Transverse colon (tissue), 4 donors: ENCODE measurements at regions of chr2 and their contacts with region 1.

Region 1: DNA sequence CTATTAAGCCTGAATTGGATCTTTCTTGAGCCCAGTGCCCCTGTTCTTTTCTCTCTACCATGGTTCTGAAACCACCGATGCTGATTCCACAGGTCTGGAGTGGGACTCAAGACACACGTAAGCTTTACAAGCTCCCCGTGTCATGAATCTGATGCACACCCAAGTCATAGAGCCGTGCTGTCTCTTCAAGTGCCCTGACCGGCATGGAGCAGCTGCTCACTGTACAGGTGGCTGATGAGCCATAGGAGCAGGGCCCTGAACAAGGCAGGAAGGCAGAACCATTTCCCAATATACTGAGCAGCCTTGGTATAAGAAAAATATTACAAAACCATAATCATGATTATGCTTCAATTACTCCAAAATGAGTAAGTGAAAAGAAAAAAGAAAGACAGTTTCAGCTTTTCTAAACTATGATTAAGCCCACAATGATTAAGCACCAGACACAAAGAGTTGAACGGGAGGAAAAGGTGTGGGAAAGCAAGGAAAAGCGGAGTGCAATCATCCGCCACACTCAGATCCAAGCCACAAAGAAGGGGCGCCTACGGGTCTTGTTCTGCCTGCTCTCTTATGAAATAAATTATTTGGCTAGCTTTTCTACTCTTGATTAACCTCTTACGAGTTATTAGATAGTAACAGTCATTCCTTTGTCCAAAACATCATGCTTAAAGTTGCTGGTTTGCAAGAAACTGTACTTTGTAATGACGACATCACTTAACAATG is 41.7 kb downstream of the NOL10 start:
- DNase-seq: no peak
- H3K4me3 ChIP-seq: no peak overlapping the region
- H3K27ac ChIP-seq: no peak overlapping the region
- H3K4me1 ChIP-seq: no peaks in the 10 kb centered on the region
- H3K27me3 ChIP-seq: no peaks in the 10 kb centered on the region
- CTCF ChIP-seq: no peak
- EP300 ChIP-seq: no peak
- POLR2A ChIP-seq: no peak

Region 2: DNA sequence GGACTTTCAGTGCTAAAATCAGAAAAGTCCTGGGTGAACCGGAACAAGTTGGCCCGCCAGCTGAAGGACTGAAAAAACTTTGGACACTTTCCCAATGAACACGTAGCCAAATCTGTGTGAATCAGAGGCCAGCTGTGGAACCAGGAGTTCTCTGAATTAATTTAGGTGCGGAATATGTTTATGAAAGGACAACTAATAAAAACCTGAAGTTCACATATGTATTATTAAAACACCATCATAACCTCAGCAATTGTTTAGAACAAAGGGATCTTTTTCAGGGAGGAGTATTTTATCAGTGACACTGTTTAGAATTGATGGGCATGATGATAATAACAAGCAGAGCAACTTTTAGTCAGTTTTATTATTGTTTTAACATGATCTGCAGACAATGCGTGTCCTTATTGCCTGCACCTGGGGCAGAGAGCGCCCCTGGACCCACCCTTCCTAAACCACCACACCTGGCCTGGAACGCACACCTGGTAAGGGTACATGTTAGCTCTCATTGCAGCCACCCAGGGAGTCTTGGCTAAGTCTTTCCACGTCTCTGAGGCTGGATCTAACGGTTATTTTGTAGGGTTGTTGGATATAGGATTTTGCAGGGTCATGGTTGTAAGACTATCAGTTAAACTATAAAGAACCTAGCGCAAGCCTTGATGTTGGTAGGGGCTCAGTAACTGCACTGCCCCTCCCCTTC is 190.0 kb before region 1 on chr2:
- in situ Hi-C with region 1: loop called in 1 of 4 experiments (anchors 25 kb)
- intact Hi-C with region 1: no loop called
- DNase-seq: no peak
- H3K4me3 ChIP-seq: no peak overlapping the region
- H3K27ac ChIP-seq: no peak overlapping the region
- H3K4me1 ChIP-seq: peaks cover 0 to 11% (median 5%) of the 10 kb centered on the region in 4 donors
- H3K27me3 ChIP-seq: no peaks in the 10 kb centered on the region
- CTCF ChIP-seq: no peak
- EP300 ChIP-seq: no peak
- POLR2A ChIP-seq: no peak

Region 3: DNA sequence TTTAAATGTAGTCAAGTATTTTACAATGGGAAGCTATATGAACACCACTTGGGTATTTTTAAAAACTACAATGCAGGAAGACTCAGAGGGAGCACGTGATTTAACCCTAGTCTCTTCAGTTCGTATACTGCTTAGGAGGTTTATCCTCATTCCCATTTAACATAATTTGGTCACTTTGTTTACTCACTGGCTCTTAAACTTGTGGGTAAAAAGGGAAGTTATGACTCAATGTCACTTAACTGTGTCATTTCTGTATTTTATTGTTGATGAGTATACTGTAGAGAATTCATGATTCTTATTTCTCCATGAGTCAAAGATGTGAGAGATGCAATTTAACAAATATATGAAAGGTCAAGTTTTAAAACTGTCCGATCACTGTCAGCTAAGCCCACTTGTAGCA is 555.4 kb after region 1 on chr2:
- in situ Hi-C with region 1: no loop called
- intact Hi-C with region 1: no loop called
- DNase-seq: no peak
- H3K4me3 ChIP-seq: no peak overlapping the region
- H3K27ac ChIP-seq: no peak overlapping the region
- H3K4me1 ChIP-seq: peaks cover 0 to 16% (median 2%) of the 10 kb centered on the region in 4 donors
- H3K27me3 ChIP-seq: no peaks in the 10 kb centered on the region
- CTCF ChIP-seq: no peak
- EP300 ChIP-seq: no peak
- POLR2A ChIP-seq: no peak